ENCODE measurements at regions of chr4 and their contacts with region 1.

Region 1: GRCh38 chr4:125370478-125370877 is 55.7 kb downstream of the FAT4 start:
- DNase-seq: no peak
- H3K4me3 ChIP-seq: no peak overlapping the region
- H3K27ac ChIP-seq: no peak overlapping the region
- H3K4me1 ChIP-seq: no peaks in the 10 kb centered on the region
- H3K27me3 ChIP-seq: no peaks in the 10 kb centered on the region
- CTCF ChIP-seq: no peak

Region 2: DNA sequence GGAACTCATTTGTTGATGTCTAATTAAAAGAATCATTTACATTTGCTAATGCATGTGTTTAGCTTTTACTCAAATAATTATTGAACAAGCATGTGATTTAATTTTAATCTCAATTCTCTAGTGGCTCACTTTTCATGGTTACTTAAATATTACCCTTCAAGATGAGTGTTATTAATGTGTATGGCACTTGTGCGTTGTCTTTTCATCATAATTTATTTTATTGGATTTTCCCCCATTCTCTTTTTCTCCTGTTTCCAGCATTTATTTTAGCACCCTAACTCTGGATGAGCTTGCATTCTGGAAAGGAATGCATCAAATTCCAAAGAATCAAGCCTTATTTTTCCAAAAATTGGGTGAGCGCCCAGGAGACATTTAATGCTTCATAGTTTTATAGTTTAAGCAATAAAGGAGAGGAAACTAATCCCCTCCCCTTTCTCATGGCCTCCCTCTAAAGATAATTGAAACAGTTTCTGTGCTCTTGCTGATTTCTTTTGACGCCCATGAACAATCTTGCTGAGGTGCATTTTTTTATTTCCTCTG is 246.8 kb before region 1 on chr4:
- CTCF ChIA-PET with region 1: no interaction called
- POLR2A ChIA-PET with region 1: no interaction called
- intact Hi-C with region 1: no loop called
- DNase-seq: no peak
- H3K4me3 ChIP-seq: no peak overlapping the region
- H3K27ac ChIP-seq: no peak overlapping the region
- H3K4me1 ChIP-seq: no peaks in the 10 kb centered on the region
- H3K27me3 ChIP-seq: no peaks in the 10 kb centered on the region
- CTCF ChIP-seq: no peak

Region 3: GRCh38 chr4:125184116-125184515 is 186.4 kb before region 1 on chr4:
- CTCF ChIA-PET with region 1: no interaction called
- POLR2A ChIA-PET with region 1: no interaction called
- intact Hi-C with region 1: no loop called
- DNase-seq: no peak
- H3K4me3 ChIP-seq: no peak overlapping the region
- H3K27ac ChIP-seq: no peak overlapping the region
- H3K4me1 ChIP-seq: no peaks in the 10 kb centered on the region
- H3K27me3 ChIP-seq: no peaks in the 10 kb centered on the region
- CTCF ChIP-seq: no peak

Region 4: GRCh38 chr4:125357675-125358074 is 12.8 kb before region 1 on chr4:
- CTCF ChIA-PET with region 1: no interaction called
- POLR2A ChIA-PET with region 1: interaction called, 10 read pairs
- intact Hi-C with region 1: no loop called
- DNase-seq: no peak
- H3K4me3 ChIP-seq: no peak overlapping the region
- H3K27ac ChIP-seq: no peak overlapping the region
- H3K4me1 ChIP-seq: no peaks in the 10 kb centered on the region
- H3K27me3 ChIP-seq: no peaks in the 10 kb centered on the region
- CTCF ChIP-seq: no peak

Region 5: GRCh38 chr4:125398263-125399002 is 28.0 kb after region 1 on chr4:
- CTCF ChIA-PET with region 1: no interaction called
- POLR2A ChIA-PET with region 1: no interaction called
- intact Hi-C with region 1: no loop called
- DNase-seq: no peak
- H3K4me3 ChIP-seq: no peak overlapping the region
- H3K27ac ChIP-seq: no peak overlapping the region
- H3K4me1 ChIP-seq: no peaks in the 10 kb centered on the region
- H3K27me3 ChIP-seq: no peaks in the 10 kb centered on the region
- CTCF ChIP-seq: no peak

Region 6: GRCh38 chr4:126541820-126542219 is 1171.3 kb after region 1 on chr4:
- CTCF ChIA-PET with region 1: no interaction called
- POLR2A ChIA-PET with region 1: no interaction called
- intact Hi-C with region 1: no loop called
- DNase-seq: no peak
- H3K4me3 ChIP-seq: no peak overlapping the region
- H3K27ac ChIP-seq: no peak overlapping the region
- H3K4me1 ChIP-seq: no peaks in the 10 kb centered on the region
- H3K27me3 ChIP-seq: no peaks in the 10 kb centered on the region
- CTCF ChIP-seq: no peak